ENCODE measurements at regions of chr18 and their contacts with region 1.

Region 1: GRCh38 chr18:11980555-11981382 is 538 bp upstream of the IMPA2 start:
- DNase-seq: peak; percentile 100
- H3K4me3 ChIP-seq: peak overlapping the region; percentile 85
- H3K4me3 Mint-ChIP-seq: peak overlapping the region; percentile 92
- H3K27ac Mint-ChIP-seq: peak overlapping the region; percentile 97
- H3K4me1 ChIP-seq: peaks cover 22% of the 10 kb centered on the region
- H3K4me1 Mint-ChIP-seq: no peaks in the 10 kb centered on the region
- H3K27me3 ChIP-seq: no peaks in the 10 kb centered on the region
- H3K27me3 Mint-ChIP-seq: no peaks in the 10 kb centered on the region
- CTCF ChIP-seq: peak in 1 of 2 experiments; percentile 23

Region 2: GRCh38 chr18:11482271-11482670 is 498.5 kb before region 1 on chr18:
- CTCF ChIA-PET with region 1: no interaction called
- POLR2A ChIA-PET with region 1: no interaction called
- intact Hi-C with region 1: no loop called
- DNase-seq: no peak
- H3K4me3 ChIP-seq: no peak overlapping the region
- H3K4me3 Mint-ChIP-seq: no peak overlapping the region
- H3K27ac Mint-ChIP-seq: no peak overlapping the region
- H3K4me1 ChIP-seq: no peaks in the 10 kb centered on the region
- H3K4me1 Mint-ChIP-seq: no peaks in the 10 kb centered on the region
- H3K27me3 ChIP-seq: no peaks in the 10 kb centered on the region
- H3K27me3 Mint-ChIP-seq: no peaks in the 10 kb centered on the region
- CTCF ChIP-seq: no peak

Region 3: GRCh38 chr18:11733031-11733430 is 247.7 kb before region 1 on chr18:
- CTCF ChIA-PET with region 1: interaction called, 11 read pairs
- POLR2A ChIA-PET with region 1: no interaction called
- intact Hi-C with region 1: no loop called
- DNase-seq: peak; percentile 81 to 88
- H3K4me3 ChIP-seq: no peak overlapping the region
- H3K4me3 Mint-ChIP-seq: no peak overlapping the region
- H3K27ac Mint-ChIP-seq: no peak overlapping the region
- H3K4me1 ChIP-seq: peaks cover 4% of the 10 kb centered on the region; the same call in 1 of the 2 replicates
- H3K4me1 Mint-ChIP-seq: no peaks in the 10 kb centered on the region
- H3K27me3 ChIP-seq: no peaks in the 10 kb centered on the region
- H3K27me3 Mint-ChIP-seq: no peaks in the 10 kb centered on the region
- CTCF ChIP-seq: peak; percentile 92 to 96

Region 4: GRCh38 chr18:11851146-11851805 is 129.5 kb before region 1 on chr18 and contains the start of gene CHMP1B:
- CTCF ChIA-PET with region 1: no interaction called
- POLR2A ChIA-PET with region 1: interaction called, 7 read pairs
- intact Hi-C with region 1: loop called (anchors 2 kb)
- DNase-seq: peak; percentile 96 to 97
- H3K4me3 ChIP-seq: peak within 1 kb of the TSS; percentile 91
- H3K4me3 Mint-ChIP-seq: peak within 1 kb of the TSS; percentile 93
- H3K27ac Mint-ChIP-seq: peak within 1 kb of the TSS; percentile 93
- H3K4me1 ChIP-seq: peaks cover 47% of the 10 kb centered on the region
- H3K4me1 Mint-ChIP-seq: peaks cover 13% of the 10 kb centered on the region
- H3K27me3 ChIP-seq: no peaks in the 10 kb centered on the region
- H3K27me3 Mint-ChIP-seq: no peaks in the 10 kb centered on the region
- CTCF ChIP-seq: no peak
- total RNA-seq, gene CHMP1B: 45.2 and 56.5 TPM in 2 replicates

Region 5: GRCh38 chr18:11908182-11909060 is 72.3 kb before region 1 on chr18 and contains the start of gene MPPE1:
- CTCF ChIA-PET with region 1: no interaction called
- POLR2A ChIA-PET with region 1: interaction called, 5 read pairs
- intact Hi-C with region 1: loop called (anchors 1 kb)
- DNase-seq: peak; percentile 87 to 93
- H3K4me3 ChIP-seq: peak within 1 kb of the TSS; percentile 87
- H3K4me3 Mint-ChIP-seq: peak within 1 kb of the TSS; percentile 89
- H3K27ac Mint-ChIP-seq: peak within 1 kb of the TSS; percentile 91
- H3K4me1 ChIP-seq: peaks cover 25% of the 10 kb centered on the region
- H3K4me1 Mint-ChIP-seq: peaks cover 5% of the 10 kb centered on the region
- H3K27me3 ChIP-seq: no peaks in the 10 kb centered on the region
- H3K27me3 Mint-ChIP-seq: no peaks in the 10 kb centered on the region
- CTCF ChIP-seq: no peak
- total RNA-seq, gene MPPE1: 47.4 and 52.6 TPM in 2 replicates

Region 6: DNA sequence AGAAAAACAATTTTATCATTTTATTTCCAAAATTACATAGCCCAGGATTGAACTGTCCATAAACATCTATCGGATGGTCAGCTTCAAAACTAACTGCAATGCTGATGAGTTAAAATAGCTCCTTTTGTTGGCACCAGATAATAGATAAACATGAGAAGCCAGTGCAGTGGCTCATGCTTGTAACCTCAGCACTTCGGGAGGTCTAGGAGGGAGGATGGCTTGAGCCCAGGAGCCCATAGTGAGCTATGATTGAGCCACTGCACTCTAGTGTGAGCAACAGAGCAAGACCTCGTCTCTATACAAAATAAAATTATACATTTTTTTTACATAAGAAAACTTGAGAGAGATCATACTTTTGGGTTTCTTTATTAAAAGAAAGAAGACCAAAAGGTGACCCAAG is 34.0 kb before region 1 on chr18:
- CTCF ChIA-PET with region 1: interaction called, 8 read pairs
- POLR2A ChIA-PET with region 1: interaction called, 10 read pairs
- intact Hi-C with region 1: no loop called
- DNase-seq: no peak
- H3K4me3 ChIP-seq: no peak overlapping the region
- H3K4me3 Mint-ChIP-seq: peak overlapping the region; percentile 24
- H3K27ac Mint-ChIP-seq: peak overlapping the region; percentile 67
- H3K4me1 ChIP-seq: peaks cover 21% of the 10 kb centered on the region
- H3K4me1 Mint-ChIP-seq: peaks cover 18% of the 10 kb centered on the region
- H3K27me3 ChIP-seq: no peaks in the 10 kb centered on the region
- H3K27me3 Mint-ChIP-seq: no peaks in the 10 kb centered on the region
- CTCF ChIP-seq: no peak

Region 7: GRCh38 chr18:12015416-12016062 is 34.8 kb after region 1 on chr18:
- CTCF ChIA-PET with region 1: no interaction called
- POLR2A ChIA-PET with region 1: no interaction called
- intact Hi-C with region 1: no loop called
- DNase-seq: no peak
- H3K4me3 ChIP-seq: no peak overlapping the region
- H3K4me3 Mint-ChIP-seq: no peak overlapping the region
- H3K27ac Mint-ChIP-seq: no peak overlapping the region
- H3K4me1 ChIP-seq: no peaks in the 10 kb centered on the region
- H3K4me1 Mint-ChIP-seq: no peaks in the 10 kb centered on the region
- H3K27me3 ChIP-seq: no peaks in the 10 kb centered on the region
- H3K27me3 Mint-ChIP-seq: no peaks in the 10 kb centered on the region
- CTCF ChIP-seq: no peak

Region 8: DNA sequence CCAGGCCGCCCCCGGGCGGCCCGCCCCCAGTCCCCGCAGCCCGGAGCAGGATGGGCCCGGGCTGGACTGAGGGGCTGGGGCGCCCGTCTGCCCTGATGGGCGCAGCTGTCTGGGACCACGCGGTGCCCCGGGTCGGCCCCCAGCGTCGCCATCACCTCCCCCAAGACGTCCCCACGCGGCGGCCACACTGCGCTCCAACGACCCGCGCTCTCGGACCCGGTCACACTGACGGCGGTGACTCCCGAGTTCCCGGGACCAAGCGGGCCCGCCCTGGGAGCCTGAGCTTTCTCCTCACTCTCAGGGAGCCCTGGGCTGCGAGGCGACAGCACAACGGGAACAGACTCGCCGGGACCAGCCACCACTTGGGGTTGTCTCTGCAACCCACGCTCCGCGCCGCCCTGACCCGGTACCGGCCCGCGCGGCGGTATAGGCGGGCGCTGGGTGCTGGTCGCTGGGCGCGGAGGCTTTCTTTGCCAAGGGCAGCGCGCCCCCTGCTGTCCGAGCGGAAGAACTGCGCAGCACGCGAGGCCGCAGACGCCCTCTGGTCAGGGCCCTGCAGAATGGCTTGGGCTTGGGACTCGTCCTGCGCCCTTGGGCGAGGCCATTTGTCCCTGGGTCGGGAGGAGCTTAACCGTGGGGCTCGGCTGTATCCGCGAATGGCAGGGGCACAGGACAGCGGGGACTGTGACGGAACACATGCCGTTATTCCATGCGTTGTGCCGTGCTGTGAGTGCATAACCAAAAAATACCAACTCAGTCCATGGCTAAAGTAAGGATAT is 58.1 kb after region 1 on chr18:
- CTCF ChIA-PET with region 1: interaction called, 18 read pairs
- POLR2A ChIA-PET with region 1: interaction called, 4 read pairs
- intact Hi-C with region 1: no loop called
- DNase-seq: peak; percentile 83 to 90
- H3K4me3 ChIP-seq: peak overlapping the region; percentile 52
- H3K4me3 Mint-ChIP-seq: peak overlapping the region; percentile 80
- H3K27ac Mint-ChIP-seq: no peak overlapping the region
- H3K4me1 ChIP-seq: peaks cover 3% of the 10 kb centered on the region; the same call in 1 of the 2 replicates
- H3K4me1 Mint-ChIP-seq: no peaks in the 10 kb centered on the region
- H3K27me3 ChIP-seq: no peaks in the 10 kb centered on the region
- H3K27me3 Mint-ChIP-seq: peaks cover 2% of the 10 kb centered on the region
- CTCF ChIP-seq: peak; percentile 96 to 97